HCT116 (cell line): ENCODE measurements at regions of chr18 and their contacts with region 1.

Region 1: DNA sequence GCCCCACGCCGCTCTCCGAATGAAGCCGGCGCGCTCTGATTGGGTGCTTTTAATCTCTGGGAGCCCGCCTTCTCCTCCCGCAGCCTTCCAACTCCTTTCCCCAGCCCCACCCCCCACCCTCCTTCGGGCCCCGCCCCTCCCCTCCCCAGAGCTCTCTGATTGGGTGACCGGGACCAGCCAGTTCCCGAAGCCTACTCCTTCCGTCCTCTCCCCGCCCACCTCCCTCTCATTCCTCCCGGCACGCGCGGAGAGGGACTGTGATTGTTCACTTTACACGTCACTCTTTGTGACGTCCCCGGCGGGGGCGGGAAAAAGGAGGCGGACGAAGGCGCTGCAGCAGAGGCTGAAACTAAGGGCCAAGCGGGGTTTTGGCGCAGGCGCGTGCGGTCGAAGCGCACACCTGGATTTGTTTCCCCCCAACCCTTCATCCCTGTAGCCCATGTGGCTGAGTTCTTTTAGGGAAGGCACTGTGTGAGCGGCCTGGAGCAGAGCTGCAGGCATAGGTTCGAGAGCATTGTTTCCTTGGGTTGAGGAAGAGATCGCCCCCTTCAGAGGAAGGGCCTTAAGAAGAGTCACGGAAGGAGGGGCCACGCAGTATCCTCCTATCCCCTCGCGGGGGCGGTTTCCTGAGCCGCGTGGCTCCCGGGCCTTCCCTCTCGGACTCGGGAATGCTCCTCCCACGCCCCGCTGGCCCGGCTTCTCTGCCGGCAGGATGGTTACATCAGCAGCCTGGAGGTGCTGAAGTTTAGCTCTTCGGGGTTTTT is at the start of gene MEX3C:
- DNase-seq: peak; percentile 97
- ATAC-seq: peak; percentile 89
- H3K4me3 ChIP-seq: peak within 1 kb of the TSS; percentile 83 to 98
- H3K27ac ChIP-seq: peak within 1 kb of the TSS; percentile 88
- H3K4me1 ChIP-seq: peaks cover 8 to 26% of the 10 kb centered on the region in 2 experiments; a peak in 3 of 4 replicates
- H3K27me3 ChIP-seq: no peaks in the 10 kb centered on the region
- CTCF ChIP-seq: 0 out of 6 replicates have a peak, but pooled peaks of 2 of the 3 experiments have one; percentile 3 to 12
- POLR2A ChIP-seq: peak; percentile 84
- RAD21 ChIP-seq: no peak
- total RNA-seq, gene MEX3C: 45.0 TPM

Region 2: DNA sequence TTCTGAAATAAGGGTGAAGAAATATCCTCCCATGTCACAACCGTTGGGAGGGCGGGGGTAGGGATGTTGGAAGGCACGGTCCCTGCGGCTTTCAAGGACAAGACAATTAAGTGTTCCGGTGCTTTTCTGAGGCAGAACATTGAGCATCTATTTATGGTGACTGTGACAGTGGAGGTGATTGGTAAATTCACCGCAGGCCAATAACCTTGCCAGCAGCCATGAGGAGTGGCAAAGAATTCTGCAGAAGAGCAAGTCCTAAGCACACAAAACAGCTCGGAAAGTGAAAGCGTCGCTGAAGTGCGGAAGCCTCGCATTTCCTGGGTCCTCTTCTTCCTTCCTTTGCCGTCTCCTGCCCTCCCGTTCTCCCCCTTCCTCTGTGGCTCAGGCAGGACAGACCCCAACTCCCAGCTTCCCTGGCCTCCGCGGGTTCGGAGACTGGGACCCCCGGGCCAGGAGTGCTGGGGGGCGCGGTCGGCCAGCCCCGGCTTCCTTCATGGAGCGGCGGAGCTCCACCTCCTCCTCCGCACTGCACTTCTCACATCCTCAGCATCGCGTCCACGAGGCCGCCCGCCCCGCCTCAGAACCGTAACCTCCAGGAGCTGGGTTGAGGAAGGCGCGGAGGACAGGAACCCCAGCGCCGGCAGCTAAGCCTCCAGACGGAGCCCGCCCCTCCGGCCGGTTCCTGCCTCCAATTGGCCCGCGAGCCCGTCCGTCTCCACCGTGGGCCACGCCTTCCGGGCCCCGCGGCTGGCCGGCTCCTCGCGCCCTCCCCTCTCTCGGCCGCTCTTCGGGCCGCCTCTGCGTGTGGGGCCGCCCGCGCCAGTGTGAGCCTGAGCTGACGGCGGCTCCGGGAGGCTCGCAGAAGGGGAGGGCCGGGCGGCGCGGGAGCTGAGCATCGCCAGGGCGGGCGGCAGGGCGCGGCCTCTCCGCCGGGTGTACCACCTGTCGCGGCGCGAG is 319.2 kb before region 1 on chr18 and contains the start of gene ME2:
- CTCF ChIA-PET with region 1: no interaction called
- POLR2A ChIA-PET with region 1: no interaction called
- RAD21 ChIA-PET with region 1: no interaction called
- intact Hi-C with region 1: loop called (anchors 5 kb)
- DNase-seq: peak; percentile 61
- ATAC-seq: peak; percentile 96
- H3K4me3 ChIP-seq: peak within 1 kb of the TSS; percentile 72 to 73
- H3K27ac ChIP-seq: peak within 1 kb of the TSS; percentile 81
- H3K4me1 ChIP-seq: peaks cover 10 to 24% of the 10 kb centered on the region in 2 experiments
- H3K27me3 ChIP-seq: no peaks in the 10 kb centered on the region
- CTCF ChIP-seq: no peak
- POLR2A ChIP-seq: peak; percentile 88
- RAD21 ChIP-seq: no peak
- total RNA-seq, gene ME2: 49.0 TPM

Region 3: DNA sequence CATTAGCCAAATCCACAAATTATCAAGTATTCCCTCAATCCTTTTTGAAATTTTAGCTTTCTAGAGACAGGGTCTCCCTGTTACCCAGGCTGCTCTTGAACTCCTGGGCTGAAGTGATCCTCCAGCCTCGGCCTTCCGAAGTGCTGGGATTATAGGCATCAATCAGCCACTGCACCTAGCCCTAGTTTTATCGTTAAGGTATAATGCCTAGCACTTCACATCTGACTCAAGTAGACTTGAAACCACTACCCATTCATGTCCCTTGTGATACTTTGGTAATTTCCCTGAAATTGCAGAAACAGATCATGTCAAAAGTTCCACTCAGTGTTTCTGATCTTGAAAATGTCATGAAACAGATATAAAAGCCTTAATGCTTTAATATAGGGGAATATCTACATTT is 26.6 kb before region 1 on chr18:
- CTCF ChIA-PET with region 1: no interaction called
- POLR2A ChIA-PET with region 1: no interaction called
- RAD21 ChIA-PET with region 1: no interaction called
- intact Hi-C with region 1: no loop called
- DNase-seq: no peak
- ATAC-seq: no peak
- H3K4me3 ChIP-seq: no peak overlapping the region
- H3K27ac ChIP-seq: no peak overlapping the region
- H3K4me1 ChIP-seq: no peaks in the 10 kb centered on the region
- H3K27me3 ChIP-seq: no peaks in the 10 kb centered on the region
- CTCF ChIP-seq: no peak
- POLR2A ChIP-seq: no peak
- RAD21 ChIP-seq: no peak

Region 4: DNA sequence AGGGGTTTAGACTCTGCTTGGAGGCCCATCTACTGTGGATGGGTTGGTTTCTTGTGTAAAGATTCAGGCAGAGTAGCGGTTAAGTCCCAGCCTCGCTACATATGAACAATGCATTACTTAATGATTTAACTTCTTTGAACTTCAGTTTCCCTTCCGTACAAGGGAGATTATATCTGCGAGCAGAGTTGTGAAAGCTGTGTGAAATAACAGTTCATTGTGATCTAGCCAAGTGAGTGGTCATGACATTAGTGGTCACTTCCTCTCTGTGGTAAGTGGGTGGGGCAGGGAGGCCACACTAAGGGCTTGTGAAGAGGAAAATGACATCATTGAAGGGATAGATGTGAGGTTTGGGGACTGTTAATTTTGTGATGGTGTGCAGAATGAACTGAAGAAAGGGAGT is 13.7 kb after region 1 on chr18:
- CTCF ChIA-PET with region 1: interaction called, 3 read pairs
- POLR2A ChIA-PET with region 1: interaction called, 10 read pairs
- RAD21 ChIA-PET with region 1: no interaction called
- intact Hi-C with region 1: no loop called
- DNase-seq: no peak
- ATAC-seq: no peak
- H3K4me3 ChIP-seq: no peak overlapping the region
- H3K27ac ChIP-seq: no peak overlapping the region
- H3K4me1 ChIP-seq: peaks cover 0 to 4% of the 10 kb centered on the region in 2 experiments; a peak in 1 of 4 replicates
- H3K27me3 ChIP-seq: no peaks in the 10 kb centered on the region
- CTCF ChIP-seq: no peak
- POLR2A ChIP-seq: no peak
- RAD21 ChIP-seq: no peak